Activated naive CD4-positive, alpha-beta T cell treated with anti-CD3 and anti-CD28 coated beads for 36 hours (primary cell): ENCODE measurements at regions of chr5 and their contacts with region 1.

Region 1: GRCh38 chr5:174311531-174312269 is 266.2 kb downstream of the NSG2 start:
- DNase-seq: peak; percentile 71
- H3K4me3 Mint-ChIP-seq: no peak overlapping the region
- H3K27ac Mint-ChIP-seq: no peak overlapping the region
- H3K4me1 Mint-ChIP-seq: peaks cover 6% of the 10 kb centered on the region
- H3K27me3 Mint-ChIP-seq: peaks cover 39% of the 10 kb centered on the region

Region 2: DNA sequence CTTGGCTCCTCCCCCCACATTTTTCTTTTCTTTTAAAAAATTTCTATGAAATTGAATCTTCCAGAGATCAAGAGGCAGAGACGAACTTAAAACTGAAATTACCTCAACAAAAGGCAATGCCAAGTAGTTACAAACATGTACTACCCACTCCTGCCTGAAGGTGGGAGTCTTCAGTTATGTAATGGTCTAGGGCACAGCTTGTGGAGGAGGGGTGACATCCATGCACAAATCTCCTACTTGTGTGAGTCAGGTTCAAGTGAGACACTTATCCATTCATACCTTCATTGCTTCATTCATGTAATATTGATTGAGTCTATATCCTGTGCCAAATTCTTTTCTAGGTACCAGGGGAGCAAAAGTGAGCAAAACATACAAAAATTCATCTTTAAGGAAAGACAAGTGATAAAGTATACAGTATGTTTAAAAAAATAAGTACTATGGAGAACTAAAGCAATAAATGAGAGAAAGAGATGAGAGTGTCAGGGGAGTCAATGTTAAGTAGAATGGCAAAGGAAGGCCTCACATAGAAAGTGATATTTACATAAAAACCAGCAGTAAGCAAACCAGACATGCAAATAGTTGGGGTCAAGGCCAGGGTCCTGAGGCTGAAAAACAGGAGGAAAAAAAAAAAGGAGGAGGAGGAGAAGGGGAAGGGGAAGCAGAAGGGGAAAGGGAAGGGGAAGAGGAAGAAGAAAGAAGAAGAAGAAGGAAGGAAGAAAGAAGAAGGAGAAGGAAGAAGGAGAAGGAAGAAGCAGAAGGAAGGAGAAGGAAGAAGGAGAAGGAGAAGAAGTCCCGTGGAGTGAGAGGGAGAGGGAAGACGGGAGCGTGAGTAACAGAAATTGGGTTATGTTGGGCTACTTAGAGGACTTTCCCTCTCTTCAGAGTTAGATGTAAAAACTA is 291.1 kb before region 1 on chr5:
- CTCF ChIA-PET with region 1: interaction called, 3 read pairs
- intact Hi-C with region 1: loop called (anchors 5 kb)
- DNase-seq: peak; percentile 39
- H3K4me3 Mint-ChIP-seq: no peak overlapping the region
- H3K27ac Mint-ChIP-seq: no peak overlapping the region
- H3K4me1 Mint-ChIP-seq: no peaks in the 10 kb centered on the region
- H3K27me3 Mint-ChIP-seq: peaks cover 29% of the 10 kb centered on the region

Region 3: DNA sequence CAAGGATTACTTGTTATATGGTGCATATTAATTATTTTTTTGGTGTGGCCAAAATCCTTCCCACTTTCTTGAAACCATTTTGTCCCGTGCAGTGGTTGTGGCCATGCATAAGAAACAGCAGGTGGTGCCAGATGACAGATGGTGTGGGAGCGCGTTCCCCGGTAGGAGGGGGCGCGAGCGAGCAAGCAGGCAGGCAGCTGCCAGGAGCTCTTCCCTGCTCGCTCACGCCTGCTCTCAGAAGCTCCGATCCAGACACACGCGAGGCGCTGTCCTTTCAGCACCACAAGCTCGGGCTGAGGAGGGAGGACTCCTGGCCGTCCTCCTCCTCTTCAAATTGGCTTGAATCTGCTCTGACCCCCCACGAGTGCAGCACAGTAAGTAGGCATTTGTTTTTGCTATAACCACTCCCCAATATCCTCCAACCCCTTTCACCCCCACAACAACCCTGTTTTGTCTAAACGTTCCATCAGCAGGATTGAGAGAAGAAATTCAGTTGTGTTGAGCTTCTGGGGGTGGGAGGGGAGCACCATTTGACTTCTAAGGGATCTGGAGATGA is 266.2 kb before region 1 on chr5 and contains the start of gene NSG2:
- CTCF ChIA-PET with region 1: interaction called, 4 read pairs
- intact Hi-C with region 1: loop called (anchors 2 kb)
- DNase-seq: peak; percentile 62
- H3K4me3 Mint-ChIP-seq: no peak within 1 kb of the TSS
- H3K27ac Mint-ChIP-seq: no peak within 1 kb of the TSS
- H3K4me1 Mint-ChIP-seq: no peaks in the 10 kb centered on the region
- H3K27me3 Mint-ChIP-seq: peaks cover 37% of the 10 kb centered on the region
- total RNA-seq, gene NSG2: not detected

Region 4: DNA sequence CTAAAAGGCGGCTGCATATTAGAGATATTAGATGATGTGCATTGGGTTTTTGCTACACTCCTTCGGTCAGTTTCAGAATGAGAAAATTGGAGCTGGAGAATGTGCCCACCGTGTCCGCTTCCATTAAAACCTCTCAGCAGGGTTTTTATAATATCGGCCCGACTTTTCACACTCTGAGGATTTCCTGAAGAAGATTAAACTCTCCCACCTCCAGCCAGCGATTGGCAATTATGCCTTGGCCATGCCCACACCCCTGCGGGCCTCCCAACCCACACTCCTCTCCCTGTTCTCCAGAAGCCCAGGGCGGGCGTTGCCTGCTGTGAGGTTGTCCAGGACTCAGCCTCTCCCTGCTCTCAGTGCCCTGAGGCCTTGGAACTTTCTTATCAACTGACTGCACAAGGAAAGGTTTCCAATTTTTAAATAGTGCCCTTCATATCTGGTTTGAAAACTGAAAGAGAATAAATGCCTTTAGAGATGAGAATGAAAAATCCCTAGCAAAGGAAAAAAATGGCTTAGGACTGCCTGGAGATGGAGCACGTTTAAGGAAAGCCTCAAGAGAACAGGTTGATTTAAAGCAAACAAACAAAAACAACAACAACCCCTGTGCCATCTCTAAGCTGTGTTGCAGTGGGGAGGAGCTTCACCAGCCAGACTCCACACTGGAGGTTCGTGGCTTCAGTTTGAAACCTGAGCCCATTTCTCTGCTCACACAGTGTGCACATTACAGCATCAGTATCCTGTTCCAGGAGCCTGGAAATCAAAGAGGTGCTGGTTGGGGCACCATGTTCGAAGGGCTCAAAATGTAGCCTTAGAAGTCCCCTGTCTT is 26.7 kb after region 1 on chr5:
- CTCF ChIA-PET with region 1: no interaction called
- intact Hi-C with region 1: no loop called
- DNase-seq: no peak
- H3K4me3 Mint-ChIP-seq: no peak overlapping the region
- H3K27ac Mint-ChIP-seq: no peak overlapping the region
- H3K4me1 Mint-ChIP-seq: no peaks in the 10 kb centered on the region
- H3K27me3 Mint-ChIP-seq: peaks cover 29% of the 10 kb centered on the region